ENCODE measurements at regions of chr20 and their contacts with region 1.

Region 1: DNA sequence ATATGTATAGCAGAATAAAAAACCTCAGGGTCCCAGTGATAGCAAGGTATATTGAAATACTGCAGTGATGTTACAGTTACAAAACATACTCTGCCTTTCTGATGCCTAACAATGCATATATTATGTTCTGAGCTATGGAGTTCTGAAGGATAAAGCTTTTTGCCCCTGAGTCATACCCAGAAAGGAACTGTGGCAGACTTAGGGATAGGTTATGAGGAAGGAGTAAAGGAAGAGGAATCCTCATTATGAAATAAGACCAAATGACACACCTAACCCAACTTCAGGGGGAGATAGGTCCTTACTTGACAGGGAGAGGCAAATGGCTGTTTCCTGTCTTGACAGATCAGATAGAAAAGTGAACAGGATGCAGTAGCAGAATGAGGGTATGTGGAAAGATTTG is 940.6 kb upstream of the FLRT3 start:
- DNase-seq: peak in 1 of 2 experiments; percentile 42
- H3K4me3 ChIP-seq: no peak overlapping the region
- H3K27ac ChIP-seq: no peak overlapping the region
- H3K4me1 ChIP-seq: no peaks in the 10 kb centered on the region
- H3K27me3 ChIP-seq: no peaks in the 10 kb centered on the region
- CTCF ChIP-seq: no peak

Region 2: GRCh38 chr20:14790771-14791620 is 487.0 kb before region 1 on chr20:
- CTCF ChIA-PET with region 1: no interaction called
- POLR2A ChIA-PET with region 1: no interaction called
- intact Hi-C with region 1: no loop called
- DNase-seq: no peak
- H3K4me3 ChIP-seq: no peak overlapping the region
- H3K27ac ChIP-seq: no peak overlapping the region
- H3K4me1 ChIP-seq: no peaks in the 10 kb centered on the region
- H3K27me3 ChIP-seq: no peaks in the 10 kb centered on the region
- CTCF ChIP-seq: no peak

Region 3: GRCh38 chr20:15031546-15032351 is 246.3 kb before region 1 on chr20:
- CTCF ChIA-PET with region 1: no interaction called
- POLR2A ChIA-PET with region 1: no interaction called
- intact Hi-C with region 1: no loop called
- DNase-seq: no peak
- H3K4me3 ChIP-seq: no peak overlapping the region
- H3K27ac ChIP-seq: no peak overlapping the region
- H3K4me1 ChIP-seq: no peaks in the 10 kb centered on the region
- H3K27me3 ChIP-seq: no peaks in the 10 kb centered on the region
- CTCF ChIP-seq: no peak

Region 4: GRCh38 chr20:15155848-15156401 is 122.1 kb before region 1 on chr20:
- CTCF ChIA-PET with region 1: no interaction called
- POLR2A ChIA-PET with region 1: no interaction called
- intact Hi-C with region 1: no loop called
- DNase-seq: peak; percentile 0 to 83
- H3K4me3 ChIP-seq: no peak overlapping the region
- H3K27ac ChIP-seq: peak overlapping the region; percentile 59
- H3K4me1 ChIP-seq: peaks cover 12% of the 10 kb centered on the region
- H3K27me3 ChIP-seq: no peaks in the 10 kb centered on the region
- CTCF ChIP-seq: no peak

Region 5: DNA sequence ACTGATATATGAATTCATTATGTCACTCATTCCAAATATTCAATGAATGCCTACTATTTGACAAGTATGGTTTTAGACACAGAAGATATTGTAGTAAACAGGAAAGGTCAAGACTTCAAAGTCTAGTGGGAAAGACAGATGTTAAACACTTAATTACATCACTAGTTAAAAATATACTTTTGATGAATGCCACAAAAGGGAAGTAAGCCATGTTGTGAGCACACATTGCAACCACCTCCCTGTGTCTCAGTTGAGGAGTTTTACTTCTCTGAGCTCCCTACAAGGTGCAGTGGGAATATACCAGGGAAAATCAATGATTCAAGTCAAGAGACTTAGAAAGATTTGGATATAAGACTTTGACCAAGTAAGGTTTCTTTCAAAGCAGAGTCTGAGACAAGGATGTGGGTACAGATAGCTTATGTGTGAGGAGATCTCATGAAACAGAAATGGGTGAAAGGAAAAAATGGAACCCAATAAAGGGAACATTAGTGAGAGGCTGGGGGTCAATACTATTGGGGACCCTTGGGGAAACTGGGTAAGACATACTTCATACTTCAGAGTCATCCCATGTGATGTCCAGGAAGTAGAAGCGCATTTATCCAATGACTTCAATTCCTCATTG is 791.5 kb after region 1 on chr20:
- CTCF ChIA-PET with region 1: no interaction called
- POLR2A ChIA-PET with region 1: no interaction called
- intact Hi-C with region 1: loop called (anchors 5 kb)
- DNase-seq: no peak
- H3K4me3 ChIP-seq: no peak overlapping the region
- H3K27ac ChIP-seq: no peak overlapping the region
- H3K4me1 ChIP-seq: no peaks in the 10 kb centered on the region; the same call in 1 of the 2 replicates
- H3K27me3 ChIP-seq: no peaks in the 10 kb centered on the region
- CTCF ChIP-seq: no peak